B cell (primary cell): ENCODE measurements at regions of chr12 and their contacts with region 1.

Region 1: GRCh38 chr12:124747426-124748108 is 116.1 kb downstream of the SCARB1 start:
- DNase-seq: no peak
- ATAC-seq: no peak
- H3K4me3 ChIP-seq: no peak overlapping the region
- H3K4me3 Mint-ChIP-seq: no peak overlapping the region
- H3K27ac ChIP-seq: no peak overlapping the region
- H3K27ac Mint-ChIP-seq: no peak overlapping the region
- H3K4me1 ChIP-seq: peaks cover 0 to 4% of the 10 kb centered on the region in 2 donors
- H3K4me1 Mint-ChIP-seq: peaks cover 16% of the 10 kb centered on the region
- H3K27me3 ChIP-seq: peaks cover 0 to 21% (median 5%) of the 10 kb centered on the region in 4 experiments
- H3K27me3 Mint-ChIP-seq: peaks cover 39% of the 10 kb centered on the region
- CTCF ChIP-seq: no peak

Region 2: GRCh38 chr12:124713436-124714082 is 34.0 kb before region 1 on chr12:
- CTCF ChIA-PET with region 1: no interaction called
- POLR2A ChIA-PET with region 1: no interaction called
- intact Hi-C with region 1: loop called (anchors 1 kb)
- DNase-seq: peak; percentile 65
- ATAC-seq: peak; percentile 80
- H3K4me3 ChIP-seq: peak overlapping the region in 3 of 5 experiments; percentile 41 to 72 (median 49)
- H3K4me3 Mint-ChIP-seq: peak overlapping the region; percentile 73
- H3K27ac ChIP-seq: peak overlapping the region; percentile 52 to 76
- H3K27ac Mint-ChIP-seq: peak overlapping the region; percentile 70
- H3K4me1 ChIP-seq: peaks cover 16 to 17% of the 10 kb centered on the region in 2 donors
- H3K4me1 Mint-ChIP-seq: peaks cover 16% of the 10 kb centered on the region
- H3K27me3 ChIP-seq: no peaks in the 10 kb centered on the region
- H3K27me3 Mint-ChIP-seq: no peaks in the 10 kb centered on the region
- CTCF ChIP-seq: no peak

Region 3: DNA sequence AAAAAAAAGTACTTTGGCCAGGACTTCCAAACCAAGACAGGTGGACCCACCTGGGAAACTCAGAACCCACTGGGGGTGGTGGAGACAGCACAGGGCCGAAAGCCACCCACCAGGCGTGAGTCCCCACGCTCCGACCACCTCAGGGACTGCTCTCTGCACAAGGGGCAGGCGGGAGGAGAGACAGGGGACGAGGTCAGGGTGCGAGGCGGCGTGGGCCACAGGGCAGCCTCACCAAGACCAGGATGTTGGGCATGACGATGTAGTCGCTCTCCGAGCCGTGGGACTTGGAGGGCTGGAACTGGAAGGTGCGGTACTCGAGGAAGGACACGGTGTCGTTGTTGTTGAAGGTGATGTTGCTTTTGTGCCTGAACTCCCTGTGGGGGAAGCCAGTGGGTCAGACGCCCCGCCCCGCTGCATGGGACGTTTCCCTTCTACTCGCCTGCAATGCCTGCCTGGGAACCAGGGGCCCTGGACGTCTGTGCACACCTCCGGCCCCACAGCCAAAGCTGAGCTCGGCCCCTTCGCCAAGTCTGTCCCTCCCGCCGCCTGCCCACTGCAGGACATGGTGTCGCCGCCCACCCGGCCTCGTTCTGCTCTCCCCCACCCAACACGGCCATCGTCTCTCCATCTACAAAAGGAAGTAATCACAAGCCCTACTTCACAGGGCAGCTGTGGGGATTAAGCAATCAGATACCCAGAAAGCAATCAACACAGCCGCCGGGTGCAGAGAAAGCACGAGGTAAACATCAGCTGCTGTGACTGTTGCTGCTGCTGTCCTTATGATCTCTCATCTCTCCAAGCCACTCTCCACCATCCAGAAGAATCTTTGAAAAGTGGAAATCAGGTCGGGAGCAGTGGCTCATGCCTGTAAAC is 67.4 kb after region 1 on chr12:
- CTCF ChIA-PET with region 1: no interaction called
- POLR2A ChIA-PET with region 1: no interaction called
- intact Hi-C with region 1: no loop called
- DNase-seq: no peak
- ATAC-seq: no peak
- H3K4me3 ChIP-seq: no peak overlapping the region
- H3K4me3 Mint-ChIP-seq: no peak overlapping the region
- H3K27ac ChIP-seq: no peak overlapping the region
- H3K27ac Mint-ChIP-seq: no peak overlapping the region
- H3K4me1 ChIP-seq: no peaks in the 10 kb centered on the region
- H3K4me1 Mint-ChIP-seq: no peaks in the 10 kb centered on the region
- H3K27me3 ChIP-seq: no peaks in the 10 kb centered on the region
- H3K27me3 Mint-ChIP-seq: no peaks in the 10 kb centered on the region
- CTCF ChIP-seq: no peak

Region 4: GRCh38 chr12:124863416-124864325 is 116.1 kb after region 1 on chr12 and contains the start of gene SCARB1:
- CTCF ChIA-PET with region 1: no interaction called
- POLR2A ChIA-PET with region 1: no interaction called
- intact Hi-C with region 1: no loop called
- DNase-seq: peak; percentile 87
- ATAC-seq: peak; percentile 89
- H3K4me3 ChIP-seq: peak within 1 kb of the TSS; percentile 19 to 78 (median 62)
- H3K4me3 Mint-ChIP-seq: peak within 1 kb of the TSS; percentile 87
- H3K27ac ChIP-seq: peak within 1 kb of the TSS; percentile 63 to 80
- H3K27ac Mint-ChIP-seq: peak within 1 kb of the TSS; percentile 87
- H3K4me1 ChIP-seq: peaks cover 18 to 31% of the 10 kb centered on the region in 2 donors
- H3K4me1 Mint-ChIP-seq: peaks cover 42% of the 10 kb centered on the region
- H3K27me3 ChIP-seq: no peaks in the 10 kb centered on the region
- H3K27me3 Mint-ChIP-seq: no peaks in the 10 kb centered on the region
- CTCF ChIP-seq: no peak
- total RNA-seq, gene SCARB1: 25.8 and 26.8 TPM in 2 replicates